ENCODE measurements at regions of chr11 and their contacts with region 1.

Region 1: DNA sequence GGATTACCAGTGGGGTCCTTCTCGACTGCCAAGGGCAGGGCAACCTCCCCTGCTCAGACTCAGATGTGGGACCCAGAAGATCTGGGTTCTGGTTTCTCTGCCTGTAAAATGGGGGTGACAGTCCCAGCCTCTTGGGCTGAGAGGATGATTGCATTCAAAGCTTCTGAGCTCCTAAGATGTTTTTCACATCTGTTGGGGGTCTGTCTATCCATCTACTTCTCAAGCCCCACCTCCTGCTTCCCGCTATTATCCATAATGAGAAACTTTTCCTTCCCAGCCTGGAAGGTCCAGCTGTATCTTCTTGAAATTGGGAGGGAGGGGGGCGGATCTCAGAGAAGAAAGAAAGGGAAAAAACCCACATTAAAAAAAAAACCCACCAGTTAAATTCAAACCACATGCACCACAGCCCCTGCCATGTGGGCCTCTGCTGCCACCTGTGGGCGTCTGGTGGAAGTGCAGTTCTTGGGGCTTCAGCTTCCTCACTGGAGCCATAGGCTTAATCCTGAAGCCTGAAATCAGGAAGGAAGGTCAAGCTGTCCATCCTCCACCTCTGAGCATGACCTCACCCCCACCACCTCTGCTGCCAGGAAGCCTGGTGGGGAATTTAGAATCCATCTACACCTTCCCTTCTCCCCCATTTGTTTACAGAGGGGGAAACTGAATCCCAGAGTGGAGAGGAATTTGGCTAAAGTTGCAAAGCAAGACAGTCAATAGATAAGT is 27.3 kb downstream of the ARHGEF17 start:
- DNase-seq: peak; percentile 34 to 83 (median 67)
- ATAC-seq: peak; percentile 53 to 77 (median 70)
- H3K4me3 ChIP-seq: no peak overlapping the region
- H3K4me3 Mint-ChIP-seq: no peak overlapping the region
- H3K27ac ChIP-seq: no peak overlapping the region
- H3K27ac Mint-ChIP-seq: no peak overlapping the region
- H3K4me1 ChIP-seq: no peaks in the 10 kb centered on the region
- H3K4me1 Mint-ChIP-seq: no peaks in the 10 kb centered on the region
- H3K27me3 ChIP-seq: peaks cover 0 to 31% of the 10 kb centered on the region in 2 experiments
- H3K27me3 Mint-ChIP-seq: peaks cover 0 to 4% of the 10 kb centered on the region in 2 donors

Region 2: GRCh38 chr11:73295231-73295995 is 40.0 kb before region 1 on chr11:
- CTCF ChIA-PET with region 1: interaction called, 5 to 10 read pairs
- POLR2A ChIA-PET with region 1: no interaction called
- DNase-seq: peak; percentile 16 to 80 (median 65)
- ATAC-seq: peak; percentile 68 to 76 (median 76)
- H3K4me3 ChIP-seq: no peak overlapping the region
- H3K4me3 Mint-ChIP-seq: no peak overlapping the region
- H3K27ac ChIP-seq: no peak overlapping the region
- H3K27ac Mint-ChIP-seq: peak overlapping the region in 1 of 2 donors; percentile 68
- H3K4me1 ChIP-seq: no peaks in the 10 kb centered on the region
- H3K4me1 Mint-ChIP-seq: peaks cover 0 to 3% (median 0%) of the 10 kb centered on the region in 3 donors
- H3K27me3 ChIP-seq: peaks cover 0 to 35% of the 10 kb centered on the region in 2 experiments
- H3K27me3 Mint-ChIP-seq: peaks cover 18 to 22% of the 10 kb centered on the region in 2 donors

Region 3: DNA sequence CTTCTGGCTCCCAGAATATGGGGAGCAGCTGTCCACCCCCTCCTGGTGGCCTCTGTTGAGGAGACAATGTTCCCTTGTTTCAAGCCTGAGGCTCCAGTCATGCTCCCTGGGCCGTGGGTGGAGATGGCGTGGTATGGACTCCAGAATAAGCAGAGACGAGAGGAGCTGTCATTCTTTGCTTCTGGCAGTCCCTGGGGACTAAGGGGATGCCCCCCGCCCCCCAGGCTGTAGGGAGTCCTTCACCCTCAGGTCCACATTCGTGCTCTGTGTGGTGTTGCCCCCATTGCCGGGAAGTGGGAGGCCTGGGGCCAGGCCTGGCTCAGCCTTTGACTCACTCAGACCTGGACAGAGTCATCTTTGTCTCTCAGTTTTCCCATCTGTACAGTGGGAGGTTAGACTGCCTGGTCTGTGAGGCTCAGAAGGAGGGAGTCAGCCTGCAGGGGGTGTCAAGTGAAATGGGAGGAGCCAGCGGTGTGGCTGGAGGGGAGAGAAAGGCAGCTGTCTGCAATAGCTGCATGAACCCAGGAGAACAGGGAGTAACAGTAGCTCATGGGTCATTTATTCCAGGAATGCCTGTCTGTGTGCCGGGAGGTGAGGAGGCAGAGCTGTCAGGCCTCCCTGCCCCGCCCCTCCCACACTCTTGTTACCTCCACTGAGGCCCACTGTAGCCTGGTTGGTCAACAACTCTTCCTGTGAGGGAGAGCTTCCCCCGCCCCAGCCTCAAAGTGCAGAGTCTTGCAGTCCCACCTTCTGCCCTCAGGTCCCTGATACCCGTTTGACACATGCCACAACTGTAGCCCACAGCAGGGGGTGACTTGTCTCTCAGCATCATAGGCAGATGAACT is 21.0 kb before region 1 on chr11:
- CTCF ChIA-PET with region 1: interaction called, 7 to 13 read pairs
- POLR2A ChIA-PET with region 1: no interaction called
- DNase-seq: no peak
- ATAC-seq: no peak
- H3K4me3 ChIP-seq: no peak overlapping the region
- H3K4me3 Mint-ChIP-seq: no peak overlapping the region
- H3K27ac ChIP-seq: no peak overlapping the region
- H3K27ac Mint-ChIP-seq: no peak overlapping the region
- H3K4me1 ChIP-seq: peaks cover 0 to 5% of the 10 kb centered on the region in 2 experiments
- H3K4me1 Mint-ChIP-seq: peaks cover 3 to 11% (median 3%) of the 10 kb centered on the region in 3 donors
- H3K27me3 ChIP-seq: peaks cover 0 to 21% of the 10 kb centered on the region in 2 experiments
- H3K27me3 Mint-ChIP-seq: peaks cover 0 to 4% of the 10 kb centered on the region in 2 donors

Measured in T-cell (primary cell).